Naive thymus-derived CD4-positive, alpha-beta T cell (primary cell): ENCODE measurements at regions of chr11 and their contacts with region 1.

Region 1: GRCh38 chr11:31369348-31370329 is at the starts of genes DCDC1 and DNAJC24:
- DNase-seq: peak; percentile 84 to 90 (median 89)
- ATAC-seq: peak; percentile 99
- H3K4me3 ChIP-seq: peak within 1 kb of the TSS; percentile 96
- H3K4me3 Mint-ChIP-seq: peak within 1 kb of the TSS; percentile 93 to 100 (median 98)
- H3K27ac ChIP-seq: peak within 1 kb of the TSS; percentile 81
- H3K27ac Mint-ChIP-seq: peak within 1 kb of the TSS; percentile 90 to 97 (median 95)
- H3K4me1 ChIP-seq: peaks cover 21 to 31% of the 10 kb centered on the region in 2 donors
- H3K4me1 Mint-ChIP-seq: peaks cover 28 to 82% (median 66%) of the 10 kb centered on the region in 7 donors
- H3K27me3 ChIP-seq: no peaks in the 10 kb centered on the region
- H3K27me3 Mint-ChIP-seq: peaks cover 0 to 18% (median 0%) of the 10 kb centered on the region in 5 donors
- total RNA-seq, gene DCDC1: 0.13 to 0.81 (median 0.26) TPM in 4 of 5 experiments, not detected in the other
- total RNA-seq, gene DNAJC24: 12.2 to 26.3 (median 18.6) TPM

Region 2: GRCh38 chr11:31325160-31325559 is 44.5 kb before region 1 on chr11:
- CTCF ChIA-PET with region 1: no interaction called
- POLR2A ChIA-PET with region 1: no interaction called
- intact Hi-C with region 1: loop called in 1 of 2 experiments (anchors 5 kb)
- DNase-seq: no peak
- ATAC-seq: no peak
- H3K4me3 ChIP-seq: no peak overlapping the region
- H3K4me3 Mint-ChIP-seq: no peak overlapping the region
- H3K27ac ChIP-seq: no peak overlapping the region
- H3K27ac Mint-ChIP-seq: peak overlapping the region in 1 of 9 donors; percentile 3
- H3K4me1 ChIP-seq: no peaks in the 10 kb centered on the region
- H3K4me1 Mint-ChIP-seq: peaks cover 0 to 14% (median 4%) of the 10 kb centered on the region in 7 donors
- H3K27me3 ChIP-seq: peaks cover 0 to 3% of the 10 kb centered on the region in 2 donors
- H3K27me3 Mint-ChIP-seq: peaks cover 0 to 6% (median 5%) of the 10 kb centered on the region in 5 donors

Region 3: DNA sequence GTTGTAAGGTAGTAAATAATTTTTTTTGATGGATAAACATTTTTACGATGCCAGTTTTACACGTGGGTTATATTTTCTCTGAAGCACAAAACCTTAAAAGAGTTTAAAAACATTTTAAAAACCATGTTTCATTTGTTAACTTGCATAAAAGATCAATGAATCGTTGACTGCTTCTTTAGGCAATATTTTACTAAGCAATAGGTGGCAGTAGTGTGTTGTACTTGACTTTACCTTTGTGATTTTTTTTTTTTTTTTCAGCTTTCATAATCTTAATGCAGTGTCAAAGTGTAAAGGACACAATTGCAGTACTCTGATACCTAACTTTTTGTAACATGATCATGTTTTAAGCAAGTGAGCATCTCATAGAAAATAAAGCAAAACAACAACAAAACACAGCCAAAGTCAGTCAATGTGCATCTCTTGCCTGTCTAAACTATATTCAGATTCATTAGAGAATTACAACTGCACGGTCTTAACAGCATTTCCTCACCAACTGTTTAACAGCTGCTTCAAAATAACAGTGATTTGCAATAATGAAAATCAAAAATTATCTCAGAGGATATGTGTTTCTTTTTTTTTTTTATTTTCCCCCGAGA is 27.7 kb after region 1 on chr11:
- CTCF ChIA-PET with region 1: no interaction called
- POLR2A ChIA-PET with region 1: no interaction called
- intact Hi-C with region 1: loop called in 1 of 2 experiments (anchors 2 kb)
- DNase-seq: peak in 5 of 9 donors; percentile 18 to 38 (median 35)
- ATAC-seq: peak; percentile 37
- H3K4me3 ChIP-seq: no peak overlapping the region
- H3K4me3 Mint-ChIP-seq: no peak overlapping the region
- H3K27ac ChIP-seq: no peak overlapping the region
- H3K27ac Mint-ChIP-seq: no peak overlapping the region
- H3K4me1 ChIP-seq: no peaks in the 10 kb centered on the region
- H3K4me1 Mint-ChIP-seq: peaks cover 0 to 7% (median 6%) of the 10 kb centered on the region in 7 donors
- H3K27me3 ChIP-seq: no peaks in the 10 kb centered on the region
- H3K27me3 Mint-ChIP-seq: no peaks in the 10 kb centered on the region

Region 4: GRCh38 chr11:31810779-31811647 is 441.4 kb after region 1 on chr11 and contains the start of gene PAX6:
- CTCF ChIA-PET with region 1: no interaction called
- POLR2A ChIA-PET with region 1: no interaction called
- intact Hi-C with region 1: loop called in 1 of 2 experiments (anchors 10 kb)
- DNase-seq: peak in 2 of 9 donors; percentile 19 to 43
- ATAC-seq: peak; percentile 77
- H3K4me3 ChIP-seq: peak within 1 kb of the TSS; percentile 46
- H3K4me3 Mint-ChIP-seq: peak within 1 kb of the TSS; percentile 73 to 94 (median 84)
- H3K27ac ChIP-seq: no peak within 1 kb of the TSS
- H3K27ac Mint-ChIP-seq: peak within 1 kb of the TSS in 5 of 9 donors; percentile 8 to 73 (median 59)
- H3K4me1 ChIP-seq: peaks cover 16 to 28% of the 10 kb centered on the region in 2 donors
- H3K4me1 Mint-ChIP-seq: peaks cover 22 to 73% (median 61%) of the 10 kb centered on the region in 7 donors
- H3K27me3 ChIP-seq: peaks cover 16 to 66% of the 10 kb centered on the region in 2 donors
- H3K27me3 Mint-ChIP-seq: peaks cover 73 to 86% (median 77%) of the 10 kb centered on the region in 5 donors
- total RNA-seq, gene PAX6: not detected

Region 5: DNA sequence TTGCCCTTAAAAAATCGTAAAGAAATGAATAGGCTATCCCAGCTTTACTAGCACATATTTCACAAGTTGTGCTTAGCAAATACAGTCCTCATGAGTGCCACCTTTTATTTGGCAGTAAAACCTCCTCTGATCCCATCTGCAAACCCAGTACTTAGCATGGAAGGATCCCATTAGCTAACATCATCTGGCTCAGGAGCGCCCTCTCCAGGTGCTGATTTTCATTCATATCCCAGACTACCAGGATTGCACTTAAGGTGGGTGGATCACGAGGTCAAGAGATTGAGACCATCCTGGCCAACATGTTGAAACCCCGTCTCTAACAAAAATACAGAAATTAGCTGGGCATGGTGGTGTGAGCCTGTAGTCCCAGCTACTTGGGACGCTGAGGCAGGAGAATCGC is 517.5 kb after region 1 on chr11:
- CTCF ChIA-PET with region 1: no interaction called
- POLR2A ChIA-PET with region 1: no interaction called
- intact Hi-C with region 1: no loop called
- DNase-seq: no peak
- ATAC-seq: no peak
- H3K4me3 ChIP-seq: no peak overlapping the region
- H3K4me3 Mint-ChIP-seq: no peak overlapping the region
- H3K27ac ChIP-seq: no peak overlapping the region
- H3K27ac Mint-ChIP-seq: no peak overlapping the region
- H3K4me1 ChIP-seq: no peaks in the 10 kb centered on the region
- H3K4me1 Mint-ChIP-seq: no peaks in the 10 kb centered on the region
- H3K27me3 ChIP-seq: no peaks in the 10 kb centered on the region
- H3K27me3 Mint-ChIP-seq: peaks cover 2 to 44% (median 27%) of the 10 kb centered on the region in 5 donors